GM12878 (cell line): ENCODE measurements at regions of chr22 and their contacts with region 1.

Region 1: DNA sequence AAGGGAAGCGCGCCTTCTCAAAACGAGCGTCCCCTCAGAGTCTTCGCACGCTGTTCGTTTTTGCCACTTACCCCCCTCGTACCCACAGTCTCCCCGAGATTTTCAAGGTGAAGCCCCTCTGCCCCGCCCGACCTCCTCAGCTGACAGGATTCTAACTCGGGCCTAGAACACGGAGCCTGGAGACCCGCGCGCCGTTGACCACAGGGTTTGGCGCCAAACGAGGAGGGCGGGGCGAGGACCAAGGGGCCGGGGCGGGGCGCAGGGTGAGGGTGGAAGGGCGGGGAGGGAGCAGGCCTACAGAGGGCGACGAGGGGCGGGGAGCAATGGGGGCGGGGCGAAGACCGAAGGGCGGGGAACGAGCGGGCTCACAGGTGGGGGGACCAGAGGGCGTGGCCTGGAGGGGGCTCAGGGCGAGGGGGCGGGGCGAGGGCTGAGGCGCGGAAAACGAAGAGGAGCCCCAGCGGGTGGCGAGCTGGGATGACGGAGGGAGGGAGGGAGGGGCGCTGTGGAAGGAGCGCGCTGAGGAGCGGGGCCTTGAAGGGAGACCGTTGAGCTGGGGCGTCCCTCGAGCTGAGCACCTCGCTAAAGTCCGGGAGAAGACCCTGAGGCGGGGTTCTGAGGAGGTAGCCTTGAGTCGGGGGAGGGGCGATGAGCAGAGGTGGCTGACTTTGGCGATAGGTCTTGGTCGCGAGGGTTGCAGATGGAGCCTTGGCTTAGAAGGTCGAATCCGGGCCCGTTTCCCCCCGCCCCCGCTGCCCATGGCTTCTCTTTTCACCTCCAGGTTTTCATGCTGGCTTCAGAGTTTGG is at the start of gene DMC1:
- DNase-seq: peak; percentile 73
- ATAC-seq: peak; percentile 92
- H3K4me3 ChIP-seq: peak within 1 kb of the TSS; percentile 77
- H3K27ac ChIP-seq: peak within 1 kb of the TSS; percentile 55
- H3K4me1 ChIP-seq: peaks cover 7% of the 10 kb centered on the region; the same call in 1 of the 2 replicates
- H3K27me3 ChIP-seq: no peaks in the 10 kb centered on the region
- CTCF ChIP-seq: no peak
- EP300 ChIP-seq: no peak
- POLR2A ChIP-seq: peak; percentile 77
- RAD21 ChIP-seq: no peak
- polyA plus RNA-seq, gene DMC1: 1.5 to 3.5 TPM

Region 2: GRCh38 chr22:38056969-38057891 is 512.9 kb before region 1 on chr22 and contains the start of gene PICK1:
- CTCF ChIA-PET with region 1: interaction called, 75 read pairs
- POLR2A ChIA-PET with region 1: interaction called, 5 read pairs
- RAD21 ChIA-PET with region 1: interaction called, 49 read pairs
- SMC1A ChIA-PET with region 1: interaction called, 22 read pairs
- in situ Hi-C with region 1: loop called (anchors 5 kb)
- intact Hi-C with region 1: loop called (anchors 1 kb)
- DNase-seq: peak; percentile 32
- ATAC-seq: peak; percentile 87
- H3K4me3 ChIP-seq: peak within 1 kb of the TSS; percentile 76
- H3K27ac ChIP-seq: peak within 1 kb of the TSS; percentile 94
- H3K4me1 ChIP-seq: 0 out of 2 replicates have a peak, but pooled peaks cover 3% of the 10 kb centered on the region
- H3K27me3 ChIP-seq: no peaks in the 10 kb centered on the region
- CTCF ChIP-seq: no peak
- EP300 ChIP-seq: no peak
- POLR2A ChIP-seq: peak; percentile 84
- RAD21 ChIP-seq: no peak
- polyA plus RNA-seq, gene PICK1: 0.07 to 0.84 TPM

Region 3: GRCh38 chr22:38298312-38299000 is 271.7 kb before region 1 on chr22:
- CTCF ChIA-PET with region 1: interaction called, 3 read pairs
- POLR2A ChIA-PET with region 1: interaction called, 3 read pairs
- RAD21 ChIA-PET with region 1: no interaction called
- SMC1A ChIA-PET with region 1: no interaction called
- in situ Hi-C with region 1: no loop called
- intact Hi-C with region 1: loop called (anchors 10 kb)
- DNase-seq: no peak
- ATAC-seq: peak; percentile 85
- H3K4me3 ChIP-seq: no peak overlapping the region
- H3K27ac ChIP-seq: no peak overlapping the region
- H3K4me1 ChIP-seq: 0 out of 2 replicates have a peak, but pooled peaks cover under 1% of the 10 kb centered on the region
- H3K27me3 ChIP-seq: no peaks in the 10 kb centered on the region
- CTCF ChIP-seq: peak; percentile 48 to 65 (median 59)
- EP300 ChIP-seq: no peak
- POLR2A ChIP-seq: peak; percentile 59
- RAD21 ChIP-seq: peak; percentile 48

Region 4: DNA sequence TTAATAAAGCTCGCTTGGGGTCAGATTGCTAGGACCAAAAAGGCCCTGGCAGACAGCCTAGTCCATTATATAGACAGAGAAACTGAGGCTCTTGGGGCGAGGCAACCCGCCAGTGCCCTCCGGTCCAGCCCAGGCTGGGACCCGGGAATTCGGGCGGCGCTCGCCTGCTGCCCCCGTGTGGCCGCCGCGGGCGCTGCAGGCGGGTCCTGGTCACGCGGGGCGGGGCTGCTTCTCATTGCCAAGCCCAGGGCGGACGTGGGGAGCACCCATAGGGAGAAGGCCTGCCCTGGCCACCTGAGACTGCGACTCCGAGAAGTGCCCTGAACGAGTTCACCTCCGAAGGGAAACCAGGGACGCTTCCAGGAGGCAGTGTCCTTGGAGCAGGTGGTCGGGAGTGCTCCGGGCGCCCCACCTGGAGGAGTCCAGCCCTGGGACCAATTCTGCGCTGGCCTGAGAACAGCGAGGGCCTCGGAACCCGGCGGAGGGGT is 217.0 kb before region 1 on chr22:
- CTCF ChIA-PET with region 1: interaction called, 3 read pairs
- POLR2A ChIA-PET with region 1: no interaction called
- RAD21 ChIA-PET with region 1: no interaction called
- SMC1A ChIA-PET with region 1: interaction called, 3 read pairs
- in situ Hi-C with region 1: no loop called
- intact Hi-C with region 1: loop called (anchors 5 kb)
- DNase-seq: no peak
- ATAC-seq: peak; percentile 95
- H3K4me3 ChIP-seq: no peak overlapping the region
- H3K27ac ChIP-seq: no peak overlapping the region
- H3K4me1 ChIP-seq: no peaks in the 10 kb centered on the region
- H3K27me3 ChIP-seq: no peaks in the 10 kb centered on the region
- CTCF ChIP-seq: peak; percentile 91 to 94 (median 93)
- EP300 ChIP-seq: no peak
- POLR2A ChIP-seq: peak; percentile 40; the same call in 1 of the 2 replicates
- RAD21 ChIP-seq: peak; percentile 90

Region 5: GRCh38 chr22:38415561-38416321 is 154.4 kb before region 1 on chr22:
- CTCF ChIA-PET with region 1: interaction called, 3 read pairs
- POLR2A ChIA-PET with region 1: no interaction called
- RAD21 ChIA-PET with region 1: no interaction called
- SMC1A ChIA-PET with region 1: interaction called, 3 read pairs
- in situ Hi-C with region 1: no loop called
- intact Hi-C with region 1: loop called (anchors 5 kb)
- DNase-seq: no peak
- ATAC-seq: peak; percentile 27; the same call in 2 of the 3 replicates
- H3K4me3 ChIP-seq: no peak overlapping the region
- H3K27ac ChIP-seq: no peak overlapping the region
- H3K4me1 ChIP-seq: no peaks in the 10 kb centered on the region; the same call in 1 of the 2 replicates
- H3K27me3 ChIP-seq: no peaks in the 10 kb centered on the region; a peak in 1 of 4 replicates
- CTCF ChIP-seq: no peak
- EP300 ChIP-seq: no peak
- POLR2A ChIP-seq: no peak
- RAD21 ChIP-seq: no peak

Region 6: GRCh38 chr22:38506118-38506962 is 63.8 kb before region 1 on chr22 and contains the start of gene DDX17:
- CTCF ChIA-PET with region 1: interaction called, 20 read pairs
- POLR2A ChIA-PET with region 1: interaction called, 4 read pairs
- RAD21 ChIA-PET with region 1: interaction called, 6 read pairs
- SMC1A ChIA-PET with region 1: interaction called, 4 read pairs
- in situ Hi-C with region 1: no loop called
- intact Hi-C with region 1: loop called (anchors 2 kb)
- DNase-seq: peak; percentile 92
- ATAC-seq: peak; percentile 84
- H3K4me3 ChIP-seq: peak within 1 kb of the TSS; percentile 96
- H3K27ac ChIP-seq: peak within 1 kb of the TSS; percentile 86
- H3K4me1 ChIP-seq: no peaks in the 10 kb centered on the region; the same call in none of the 2 replicates
- H3K27me3 ChIP-seq: no peaks in the 10 kb centered on the region
- CTCF ChIP-seq: no peak
- EP300 ChIP-seq: no peak
- POLR2A ChIP-seq: peak; percentile 84
- RAD21 ChIP-seq: no peak
- polyA plus RNA-seq, gene DDX17: 47.1 to 91.4 TPM